Vagina (tissue), 2 donors: ENCODE measurements at regions of chr2 and their contacts with region 1.

Region 1: GRCh38 chr2:114076961-114077360 is 187.1 kb downstream of the ACTR3 start:
- DNase-seq: no peak
- H3K4me3 ChIP-seq: no peak overlapping the region
- H3K27ac ChIP-seq: no peak overlapping the region
- H3K4me1 ChIP-seq: no peaks in the 10 kb centered on the region
- H3K27me3 ChIP-seq: no peaks in the 10 kb centered on the region
- CTCF ChIP-seq: no peak
- POLR2A ChIP-seq: no peak

Region 2: DNA sequence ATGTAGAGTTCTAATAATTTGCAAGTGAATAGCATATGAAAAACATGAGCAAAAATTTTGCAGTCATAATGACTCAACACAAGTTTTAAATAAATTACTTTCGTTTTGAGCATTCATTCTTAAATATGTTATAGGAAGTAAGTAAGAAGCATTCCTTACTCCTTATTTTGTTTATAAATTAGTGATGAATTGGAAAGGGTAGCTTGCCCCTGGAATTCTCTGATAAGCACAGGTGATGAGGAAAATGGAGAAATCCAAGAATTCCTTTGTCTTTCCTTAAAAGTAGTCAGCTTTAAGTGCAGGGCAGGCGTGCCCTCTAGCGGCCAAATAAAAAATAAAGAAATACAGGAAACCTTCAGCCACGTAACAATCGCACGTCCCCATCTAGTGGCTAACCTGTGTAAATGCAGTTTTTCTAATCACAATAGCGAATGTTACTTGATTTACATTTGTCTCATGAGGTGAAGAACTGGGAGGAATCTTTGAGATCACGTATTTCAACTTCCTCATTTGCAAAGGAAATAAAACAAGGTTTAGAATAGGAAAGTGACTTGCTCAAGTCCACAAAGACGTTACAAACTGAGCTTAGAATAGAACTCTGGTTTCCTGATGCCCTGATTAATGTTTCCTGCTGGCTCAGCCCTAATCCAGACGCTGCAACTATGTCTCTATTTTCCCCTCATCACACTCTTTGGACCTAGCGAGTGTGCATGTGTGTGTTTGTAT is 686.7 kb before region 1 on chr2:
- intact Hi-C with region 1: no loop called
- DNase-seq: no peak
- H3K4me3 ChIP-seq: peak overlapping the region in 1 of 2 donors; percentile 14
- H3K27ac ChIP-seq: no peak overlapping the region
- H3K4me1 ChIP-seq: no peaks in the 10 kb centered on the region
- H3K27me3 ChIP-seq: no peaks in the 10 kb centered on the region
- CTCF ChIP-seq: peak; percentile 47 to 98 (median 96)
- POLR2A ChIP-seq: no peak

Region 3: DNA sequence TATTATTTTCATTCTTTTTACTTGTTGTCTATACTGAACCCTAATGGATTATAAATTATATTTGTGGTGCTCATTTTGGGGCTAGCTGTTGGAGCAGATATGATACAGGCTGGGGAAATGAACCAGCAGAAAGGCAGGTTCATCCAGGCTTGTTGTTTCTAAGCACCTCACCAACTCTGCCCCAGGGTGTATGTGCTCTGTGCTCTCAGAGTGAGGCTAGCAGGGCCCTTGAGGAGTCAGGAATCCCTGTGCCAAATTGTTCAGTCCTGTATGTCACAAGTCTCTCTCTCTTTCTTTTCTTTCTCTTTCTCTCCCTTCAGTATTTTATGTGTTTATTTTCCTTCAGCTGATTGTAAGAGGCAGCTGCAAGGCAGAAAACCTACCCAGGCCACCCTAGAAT is 184.4 kb after region 1 on chr2:
- intact Hi-C with region 1: no loop called
- DNase-seq: no peak
- H3K4me3 ChIP-seq: no peak overlapping the region
- H3K27ac ChIP-seq: no peak overlapping the region
- H3K4me1 ChIP-seq: no peaks in the 10 kb centered on the region
- H3K27me3 ChIP-seq: no peaks in the 10 kb centered on the region
- CTCF ChIP-seq: no peak
- POLR2A ChIP-seq: no peak

Region 4: DNA sequence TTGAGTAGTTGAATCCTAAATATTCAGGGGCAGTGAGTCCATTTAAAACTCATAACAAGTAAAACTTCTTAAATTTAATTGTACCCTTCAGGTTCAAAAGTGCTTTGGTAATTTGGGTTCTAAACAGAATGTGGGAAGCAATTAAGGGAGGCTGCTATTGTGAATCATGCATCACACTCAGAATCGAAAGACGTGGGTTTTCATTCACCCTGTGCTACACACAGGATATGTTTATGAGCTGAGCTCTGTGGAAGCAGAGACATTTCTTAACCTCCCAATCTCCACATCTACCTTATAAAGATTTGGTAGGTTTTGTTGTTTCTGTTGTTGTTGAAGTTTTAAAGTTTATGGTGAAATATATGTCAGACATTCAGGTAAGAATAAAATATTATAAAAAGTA is 998.8 kb after region 1 on chr2:
- intact Hi-C with region 1: no loop called
- DNase-seq: no peak
- H3K4me3 ChIP-seq: no peak overlapping the region
- H3K27ac ChIP-seq: no peak overlapping the region
- H3K4me1 ChIP-seq: no peaks in the 10 kb centered on the region
- H3K27me3 ChIP-seq: no peaks in the 10 kb centered on the region
- CTCF ChIP-seq: no peak
- POLR2A ChIP-seq: no peak

Region 5: GRCh38 chr2:115524452-115524851 is 1447.5 kb after region 1 on chr2:
- intact Hi-C with region 1: loop called (anchors 5 kb)
- DNase-seq: no peak
- H3K4me3 ChIP-seq: no peak overlapping the region
- H3K27ac ChIP-seq: no peak overlapping the region
- H3K4me1 ChIP-seq: no peaks in the 10 kb centered on the region
- H3K27me3 ChIP-seq: no peaks in the 10 kb centered on the region
- CTCF ChIP-seq: no peak
- POLR2A ChIP-seq: no peak